IMR-90 (cell line): ENCODE measurements at regions of chr5 and their contacts with region 1.

Region 1: DNA sequence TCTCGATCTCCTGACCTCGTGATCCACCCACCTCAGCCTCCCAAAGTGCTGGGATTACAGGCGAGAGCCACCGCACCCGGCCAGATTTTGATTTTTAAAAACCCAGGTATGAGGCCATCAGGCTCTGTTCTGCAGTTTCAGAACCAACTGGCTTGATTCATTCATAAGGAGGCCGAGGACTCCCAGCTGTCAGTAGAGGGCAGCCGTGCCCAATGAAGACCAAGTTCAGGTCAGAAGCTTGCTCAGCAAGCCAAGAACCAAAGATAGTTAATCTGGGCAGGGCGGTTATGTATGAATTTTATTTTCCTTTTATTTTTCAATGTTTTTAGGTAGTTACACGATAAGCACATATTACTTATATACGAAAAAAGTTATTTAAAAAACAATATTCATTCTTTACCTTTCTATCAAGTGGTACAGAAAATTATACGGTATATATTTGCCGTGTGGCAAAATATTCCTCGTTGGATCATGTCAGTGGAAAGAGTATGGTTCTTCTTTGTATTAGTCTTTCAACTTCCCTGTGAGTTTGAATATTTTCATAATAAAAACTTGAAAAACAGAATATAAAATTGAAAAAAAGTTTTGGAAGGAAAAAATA is 18.0 kb downstream of the MGAT1 start:
- DNase-seq: peak; percentile 87
- ATAC-seq: peak; percentile 66
- H3K4me3 ChIP-seq: no peak overlapping the region
- H3K27ac ChIP-seq: no peak overlapping the region; the same call in 1 of the 2 replicates
- H3K4me1 ChIP-seq: peaks cover 30% of the 10 kb centered on the region
- H3K27me3 ChIP-seq: no peaks in the 10 kb centered on the region
- CTCF ChIP-seq: peak; percentile 92
- POLR2A ChIP-seq: no peak
- RAD21 ChIP-seq: peak; percentile 92

Region 2: GRCh38 chr5:180259260-180259681 is 525.3 kb before region 1 on chr5:
- CTCF ChIA-PET with region 1: no interaction called
- POLR2A ChIA-PET with region 1: no interaction called
- dilution Hi-C with region 1: no loop called
- in situ Hi-C with region 1: no loop called
- intact Hi-C with region 1: no loop called
- DNase-seq: peak; percentile 1
- ATAC-seq: no peak
- H3K4me3 ChIP-seq: no peak overlapping the region
- H3K27ac ChIP-seq: no peak overlapping the region
- H3K4me1 ChIP-seq: no peaks in the 10 kb centered on the region
- H3K27me3 ChIP-seq: no peaks in the 10 kb centered on the region
- CTCF ChIP-seq: no peak
- POLR2A ChIP-seq: no peak
- RAD21 ChIP-seq: no peak

Region 3: DNA sequence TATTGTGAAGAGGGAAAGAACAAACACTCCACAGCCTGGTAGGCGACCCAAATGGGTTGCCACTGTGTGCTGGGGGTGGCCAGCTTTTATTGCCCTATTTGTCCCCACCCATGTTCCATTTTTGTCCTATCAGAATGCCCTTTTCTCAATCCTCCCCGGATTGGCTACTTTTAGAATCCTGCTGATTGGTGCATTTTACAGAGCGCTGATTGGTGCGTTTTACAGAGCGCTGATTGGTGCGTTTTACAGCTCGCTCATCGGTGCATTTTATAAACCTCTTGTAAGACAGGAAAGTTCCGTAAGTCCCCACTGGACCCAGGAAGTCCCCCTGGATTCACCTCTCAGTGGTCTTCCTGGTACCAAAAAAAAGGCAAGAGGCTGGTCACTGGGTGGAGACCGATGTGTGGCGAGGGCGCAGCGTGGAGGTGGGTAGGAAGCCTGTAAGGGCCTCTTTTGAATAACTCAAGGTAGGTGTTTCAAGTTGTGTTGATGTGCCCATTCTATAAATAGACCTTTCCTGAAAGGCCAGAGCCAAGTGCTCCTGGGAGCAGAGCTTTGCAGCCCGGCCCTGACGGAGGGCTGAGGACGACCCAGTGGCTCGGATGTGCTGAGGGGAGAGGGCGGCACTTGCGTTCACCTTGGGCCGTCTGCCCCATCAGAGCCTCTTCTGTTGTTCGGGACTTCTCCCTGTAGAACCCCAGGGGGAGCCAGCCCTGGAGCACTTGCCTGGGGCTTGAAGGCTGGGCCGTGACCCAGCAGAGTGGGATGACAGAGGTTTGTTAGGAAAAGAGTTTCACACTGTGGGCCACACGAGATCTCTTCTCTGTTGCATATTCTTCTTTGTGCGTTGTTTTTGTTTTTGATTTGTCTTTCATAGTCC is 424.3 kb before region 1 on chr5:
- CTCF ChIA-PET with region 1: no interaction called
- POLR2A ChIA-PET with region 1: no interaction called
- dilution Hi-C with region 1: no loop called
- in situ Hi-C with region 1: no loop called
- intact Hi-C with region 1: no loop called
- DNase-seq: no peak
- ATAC-seq: no peak
- H3K4me3 ChIP-seq: no peak overlapping the region
- H3K27ac ChIP-seq: no peak overlapping the region
- H3K4me1 ChIP-seq: no peaks in the 10 kb centered on the region
- H3K27me3 ChIP-seq: peaks cover 8% of the 10 kb centered on the region; the same call in 1 of the 2 replicates
- CTCF ChIP-seq: no peak
- POLR2A ChIP-seq: no peak
- RAD21 ChIP-seq: no peak

Region 4: DNA sequence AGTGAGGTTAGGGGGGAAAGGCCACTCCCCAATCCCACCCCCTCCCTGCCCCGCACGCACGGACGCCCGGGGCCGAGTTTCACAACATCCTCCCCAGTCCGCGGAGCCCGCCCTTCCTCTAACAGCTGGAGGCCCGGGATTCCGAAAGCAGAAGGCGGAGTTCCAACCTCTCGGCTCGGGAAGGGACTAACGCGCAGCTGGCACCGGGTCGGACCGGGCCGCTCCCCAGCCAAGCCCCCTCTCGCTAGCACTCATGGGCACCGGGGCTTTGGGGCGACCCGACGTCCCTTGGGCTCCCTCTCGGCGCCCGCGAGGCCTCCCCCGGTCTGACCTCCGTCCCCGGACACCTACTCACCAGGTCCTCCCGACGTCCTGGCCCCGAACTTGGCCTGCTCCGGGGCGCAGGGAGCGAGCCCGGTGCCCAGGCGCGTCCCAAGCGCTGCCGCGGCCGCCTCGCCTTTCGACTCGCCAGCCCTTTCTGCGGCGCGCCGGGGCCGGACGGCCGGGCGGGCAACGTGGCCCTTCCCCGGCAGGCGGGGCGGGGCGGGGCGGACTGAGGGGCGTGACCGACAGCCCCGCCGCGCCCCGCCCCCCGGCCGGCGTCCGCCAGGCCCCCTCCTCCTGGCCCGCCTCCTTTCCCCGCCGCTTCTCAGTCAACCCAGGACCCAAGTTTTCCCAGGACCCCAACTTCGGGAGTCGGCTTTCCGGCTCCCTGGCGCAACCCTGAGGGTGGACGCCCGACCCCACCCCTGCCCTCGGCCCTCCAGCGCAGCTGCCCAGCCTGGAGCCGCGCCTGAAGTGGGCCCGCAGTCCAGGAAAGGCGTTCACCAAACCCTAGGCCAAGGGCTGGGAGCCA is 18.0 kb after region 1 on chr5 and contains the start of gene MGAT1:
- CTCF ChIA-PET with region 1: interaction called, 6 read pairs
- POLR2A ChIA-PET with region 1: interaction called, 3 read pairs
- dilution Hi-C with region 1: no loop called
- in situ Hi-C with region 1: no loop called
- intact Hi-C with region 1: loop called (anchors 1 kb)
- DNase-seq: peak; percentile 83
- ATAC-seq: peak; percentile 88
- H3K4me3 ChIP-seq: peak within 1 kb of the TSS; percentile 96
- H3K27ac ChIP-seq: peak within 1 kb of the TSS; percentile 99
- H3K4me1 ChIP-seq: peaks cover 37% of the 10 kb centered on the region
- H3K27me3 ChIP-seq: no peaks in the 10 kb centered on the region
- CTCF ChIP-seq: no peak
- POLR2A ChIP-seq: peak; percentile 96
- RAD21 ChIP-seq: no peak
- total RNA-seq, gene MGAT1: 56.3 and 62.2 TPM in 2 replicates

Region 5: DNA sequence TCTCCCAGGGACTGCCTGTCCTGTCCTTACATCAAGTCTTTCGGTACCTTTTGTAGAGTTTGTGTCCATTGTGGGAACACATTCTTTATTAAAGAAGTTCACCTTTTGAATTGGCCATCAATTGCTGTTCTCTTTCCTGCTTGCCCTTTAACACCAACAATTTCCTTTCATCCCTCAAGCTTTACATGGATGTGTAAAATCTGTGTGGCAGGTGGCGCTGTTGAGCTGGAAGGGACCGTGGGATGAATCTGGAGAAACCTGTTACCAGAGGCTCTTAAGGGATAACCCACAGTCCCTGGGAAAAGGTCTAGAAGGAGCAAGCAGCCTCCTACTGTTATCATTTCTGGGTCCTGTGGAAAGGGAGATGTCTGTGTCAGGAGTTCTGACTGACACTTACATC is 84.4 kb after region 1 on chr5:
- CTCF ChIA-PET with region 1: interaction called, 3 read pairs
- POLR2A ChIA-PET with region 1: no interaction called
- dilution Hi-C with region 1: no loop called
- in situ Hi-C with region 1: no loop called
- intact Hi-C with region 1: loop called (anchors 2 kb)
- DNase-seq: peak; percentile 68
- ATAC-seq: peak; percentile 90
- H3K4me3 ChIP-seq: no peak overlapping the region
- H3K27ac ChIP-seq: no peak overlapping the region
- H3K4me1 ChIP-seq: no peaks in the 10 kb centered on the region
- H3K27me3 ChIP-seq: no peaks in the 10 kb centered on the region; the same call in 1 of the 2 replicates
- CTCF ChIP-seq: peak; percentile 77
- POLR2A ChIP-seq: no peak
- RAD21 ChIP-seq: peak; percentile 61

Region 6: DNA sequence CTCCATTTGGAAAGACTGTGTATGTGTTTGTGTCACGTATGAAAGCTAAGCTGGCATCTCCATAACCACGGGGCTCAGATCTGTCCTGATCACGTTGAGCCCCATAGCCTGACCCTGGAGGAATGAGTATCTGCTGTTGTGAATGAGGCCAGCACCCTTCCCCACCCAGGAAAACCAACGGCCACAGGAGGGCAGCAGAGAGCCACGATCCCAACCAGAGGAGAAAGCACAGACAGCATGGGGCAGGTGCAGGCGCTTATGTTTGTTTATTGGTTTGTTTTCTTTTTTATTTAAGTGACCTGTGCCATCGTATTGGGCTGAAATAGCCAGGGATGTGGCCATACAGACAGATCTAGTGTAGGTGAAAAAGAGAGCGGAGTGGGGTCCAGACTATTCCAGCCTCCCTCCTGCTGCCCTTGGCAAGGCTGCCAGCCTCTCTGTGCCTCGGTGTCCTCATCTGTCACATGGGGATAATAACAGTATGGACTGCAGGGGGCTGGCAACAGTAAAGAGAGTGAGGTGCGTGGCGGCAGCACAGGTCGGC is 374.8 kb after region 1 on chr5:
- CTCF ChIA-PET with region 1: no interaction called
- POLR2A ChIA-PET with region 1: no interaction called
- dilution Hi-C with region 1: no loop called
- in situ Hi-C with region 1: loop called (anchors 5 kb)
- intact Hi-C with region 1: loop called (anchors 1 kb)
- DNase-seq: peak; percentile 60
- ATAC-seq: peak; percentile 89
- H3K4me3 ChIP-seq: no peak overlapping the region
- H3K27ac ChIP-seq: no peak overlapping the region
- H3K4me1 ChIP-seq: peaks cover 4% of the 10 kb centered on the region
- H3K27me3 ChIP-seq: peaks cover 4% of the 10 kb centered on the region
- CTCF ChIP-seq: peak; percentile 93
- POLR2A ChIP-seq: no peak
- RAD21 ChIP-seq: peak; percentile 92